Activated T-helper 1 cell treated with anti-CD3 and anti-CD28 coated beads, Interleukin-12 subunit alpha, Interleukin-12 subunit beta, Interleukin-2, Interleukin-4 antibody, amounts not matched to agents 30 ng/mL and 10 ng/mL and 1 ng/mL, durations not matched to agents 14 hours and 24 hours and 36 hours (primary cell): ENCODE measurements at regions of chr14 and their contacts with region 1.

Region 1: GRCh38 chr14:104708606-104709268 is 15.3 kb upstream of the ADSS1 start:
- DNase-seq: peak; percentile 62
- H3K4me3 Mint-ChIP-seq: no peak overlapping the region
- H3K27ac Mint-ChIP-seq: peak overlapping the region; percentile 55
- H3K4me1 Mint-ChIP-seq: no peaks in the 10 kb centered on the region
- H3K27me3 Mint-ChIP-seq: no peaks in the 10 kb centered on the region

Region 2: DNA sequence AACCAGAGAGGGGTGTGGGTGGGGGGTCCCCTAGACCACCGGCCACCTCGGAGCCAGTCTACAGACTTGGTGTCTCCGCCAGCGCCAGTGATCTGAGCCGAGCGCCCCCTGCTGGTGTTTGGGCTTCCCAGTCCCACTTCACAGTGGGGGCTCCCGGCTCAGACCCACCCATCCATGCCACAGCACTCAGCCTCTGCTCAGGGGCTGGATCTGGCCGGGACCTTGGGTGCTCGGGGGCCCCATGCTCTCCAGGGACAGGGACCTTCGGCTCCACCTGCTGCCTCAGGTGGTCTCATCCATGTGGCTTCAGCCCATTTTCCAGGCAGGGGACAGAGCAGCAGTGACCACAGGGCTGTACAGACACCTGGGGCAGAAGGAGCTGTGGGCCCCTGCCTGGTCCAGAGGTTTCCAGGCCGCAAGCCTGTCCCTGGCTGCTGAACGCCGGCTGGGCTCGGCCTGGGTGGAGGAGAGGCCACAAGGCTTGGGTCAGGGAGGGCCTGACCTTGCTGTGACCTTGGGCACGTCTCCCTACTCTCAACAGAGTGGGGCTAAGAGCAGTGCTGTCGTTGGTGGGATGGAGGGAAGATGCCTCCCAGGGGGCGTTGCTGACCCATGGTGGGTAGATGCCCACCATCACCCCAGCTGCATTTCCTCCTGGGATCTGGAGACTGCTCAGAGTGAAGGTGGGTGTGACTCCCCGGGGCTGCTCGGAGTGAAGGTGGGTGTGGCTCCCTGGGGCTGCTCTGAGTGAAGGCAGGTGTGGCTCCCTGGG is 484.0 kb before region 1 on chr14:
- intact Hi-C with region 1: no loop called
- DNase-seq: no peak
- H3K4me3 Mint-ChIP-seq: no peak overlapping the region
- H3K27ac Mint-ChIP-seq: no peak overlapping the region
- H3K4me1 Mint-ChIP-seq: peaks cover 8% of the 10 kb centered on the region
- H3K27me3 Mint-ChIP-seq: peaks cover 6% of the 10 kb centered on the region

Region 3: GRCh38 chr14:104650057-104650981 is 58.4 kb before region 1 on chr14:
- intact Hi-C with region 1: loop called (anchors 1 kb)
- DNase-seq: peak; percentile 49
- H3K4me3 Mint-ChIP-seq: no peak overlapping the region
- H3K27ac Mint-ChIP-seq: no peak overlapping the region
- H3K4me1 Mint-ChIP-seq: no peaks in the 10 kb centered on the region
- H3K27me3 Mint-ChIP-seq: peaks cover 13% of the 10 kb centered on the region

Region 4: GRCh38 chr14:104665657-104666522 is 42.8 kb before region 1 on chr14:
- intact Hi-C with region 1: loop called (anchors 1 kb)
- DNase-seq: peak; percentile 14
- H3K4me3 Mint-ChIP-seq: no peak overlapping the region
- H3K27ac Mint-ChIP-seq: no peak overlapping the region
- H3K4me1 Mint-ChIP-seq: peaks cover 17% of the 10 kb centered on the region
- H3K27me3 Mint-ChIP-seq: peaks cover 19% of the 10 kb centered on the region